ENCODE measurements at regions of chr3 and their contacts with region 1.

Region 1: GRCh38 chr3:168933614-168934013 is 729.9 kb downstream of the MECOM start:
- DNase-seq: no peak
- ATAC-seq: no peak
- H3K4me3 Mint-ChIP-seq: no peak overlapping the region
- H3K27ac Mint-ChIP-seq: no peak overlapping the region
- H3K4me1 Mint-ChIP-seq: no peaks in the 10 kb centered on the region
- H3K27me3 Mint-ChIP-seq: no peaks in the 10 kb centered on the region

Region 2: GRCh38 chr3:168383573-168383972 is 550.0 kb before region 1 on chr3:
- CTCF ChIA-PET with region 1: no interaction called
- POLR2A ChIA-PET with region 1: no interaction called
- intact Hi-C with region 1: no loop called
- DNase-seq: no peak
- ATAC-seq: no peak
- H3K4me3 Mint-ChIP-seq: no peak overlapping the region
- H3K27ac Mint-ChIP-seq: no peak overlapping the region
- H3K4me1 Mint-ChIP-seq: no peaks in the 10 kb centered on the region
- H3K27me3 Mint-ChIP-seq: no peaks in the 10 kb centered on the region

Region 3: GRCh38 chr3:168884353-168884903 is 49.2 kb before region 1 on chr3:
- CTCF ChIA-PET with region 1: no interaction called
- POLR2A ChIA-PET with region 1: no interaction called
- intact Hi-C with region 1: loop called in 1 of 2 experiments (anchors 5 kb)
- DNase-seq: no peak
- ATAC-seq: no peak
- H3K4me3 Mint-ChIP-seq: no peak overlapping the region
- H3K27ac Mint-ChIP-seq: no peak overlapping the region
- H3K4me1 Mint-ChIP-seq: no peaks in the 10 kb centered on the region
- H3K27me3 Mint-ChIP-seq: no peaks in the 10 kb centered on the region

Region 4: DNA sequence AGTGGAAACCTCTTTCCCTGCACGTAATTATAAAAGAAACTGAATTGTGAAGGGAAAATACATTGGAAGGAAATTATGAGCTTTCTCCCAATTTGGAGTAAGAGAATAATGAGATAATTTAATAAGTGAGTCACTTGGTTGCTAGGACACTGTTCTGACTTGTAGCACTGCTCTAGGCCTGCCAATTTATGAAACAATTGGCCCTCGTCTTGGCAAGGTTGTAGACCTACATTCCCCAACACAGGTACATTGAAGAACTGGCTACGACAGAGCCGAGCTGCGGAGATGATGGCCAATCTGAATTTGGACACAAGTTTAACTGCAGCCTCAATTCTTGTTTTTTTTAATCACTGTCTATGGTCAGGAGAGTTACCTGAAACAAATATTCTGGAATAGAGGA is 55.8 kb after region 1 on chr3:
- CTCF ChIA-PET with region 1: no interaction called
- POLR2A ChIA-PET with region 1: no interaction called
- intact Hi-C with region 1: no loop called
- DNase-seq: no peak
- ATAC-seq: no peak
- H3K4me3 Mint-ChIP-seq: no peak overlapping the region
- H3K27ac Mint-ChIP-seq: no peak overlapping the region
- H3K4me1 Mint-ChIP-seq: no peaks in the 10 kb centered on the region
- H3K27me3 Mint-ChIP-seq: no peaks in the 10 kb centered on the region